ENCODE measurements at regions of chr5 and their contacts with region 1.

Region 1: DNA sequence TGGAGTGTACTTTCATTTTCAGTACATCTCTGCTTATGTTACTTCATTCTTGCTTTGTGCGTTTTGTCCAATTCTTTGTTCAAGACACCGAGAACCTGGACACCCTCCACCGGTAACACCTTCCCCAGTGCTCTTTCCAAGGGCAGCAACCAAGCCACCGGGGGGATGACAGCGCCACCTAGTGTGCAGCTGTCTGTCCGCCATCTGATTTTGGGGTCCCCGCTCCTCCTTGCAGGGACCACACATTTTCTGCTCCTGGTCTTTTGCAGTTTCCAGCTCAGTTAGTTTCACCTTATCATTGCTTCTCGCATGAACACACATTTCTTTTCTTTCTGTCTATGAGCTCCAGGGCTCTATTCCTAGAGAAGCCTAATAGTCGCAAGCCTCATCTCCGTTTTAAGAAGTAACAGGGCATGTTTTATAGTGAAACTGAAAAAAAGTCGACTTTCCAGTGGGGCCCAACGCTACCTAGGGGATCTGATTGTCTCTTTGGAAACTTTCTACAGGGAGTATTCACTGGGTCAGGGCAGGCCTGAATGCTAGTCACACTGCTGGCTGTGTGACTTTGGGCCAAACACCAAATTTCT is 152.1 kb downstream of the FSTL4 start:
- DNase-seq: peak; percentile 45 to 62
- H3K4me3 ChIP-seq: no peak overlapping the region
- H3K4me3 Mint-ChIP-seq: no peak overlapping the region
- H3K27ac Mint-ChIP-seq: no peak overlapping the region
- H3K4me1 ChIP-seq: peaks cover 28% of the 10 kb centered on the region
- H3K4me1 Mint-ChIP-seq: peaks cover 8% of the 10 kb centered on the region
- H3K27me3 ChIP-seq: no peaks in the 10 kb centered on the region
- H3K27me3 Mint-ChIP-seq: no peaks in the 10 kb centered on the region
- CTCF ChIP-seq: peak; percentile 69 to 75

Region 2: GRCh38 chr5:132283423-132284043 is 1176.7 kb before region 1 on chr5:
- CTCF ChIA-PET with region 1: no interaction called
- POLR2A ChIA-PET with region 1: no interaction called
- intact Hi-C with region 1: no loop called
- DNase-seq: peak in 1 of 2 experiments; percentile 39
- H3K4me3 ChIP-seq: no peak overlapping the region
- H3K4me3 Mint-ChIP-seq: no peak overlapping the region
- H3K27ac Mint-ChIP-seq: no peak overlapping the region
- H3K4me1 ChIP-seq: peaks cover 13% of the 10 kb centered on the region
- H3K4me1 Mint-ChIP-seq: peaks cover 18% of the 10 kb centered on the region
- H3K27me3 ChIP-seq: no peaks in the 10 kb centered on the region
- H3K27me3 Mint-ChIP-seq: no peaks in the 10 kb centered on the region
- CTCF ChIP-seq: peak; percentile 43 to 49

Region 3: GRCh38 chr5:133423618-133424282 is 36.5 kb before region 1 on chr5:
- CTCF ChIA-PET with region 1: interaction called, 13 read pairs
- POLR2A ChIA-PET with region 1: no interaction called
- intact Hi-C with region 1: loop called (anchors 1 kb)
- DNase-seq: peak; percentile 73 to 87
- H3K4me3 ChIP-seq: no peak overlapping the region
- H3K4me3 Mint-ChIP-seq: peak overlapping the region; percentile 17
- H3K27ac Mint-ChIP-seq: no peak overlapping the region
- H3K4me1 ChIP-seq: 0 out of 2 replicates have a peak, but pooled peaks cover 6% of the 10 kb centered on the region
- H3K4me1 Mint-ChIP-seq: peaks cover 9% of the 10 kb centered on the region
- H3K27me3 ChIP-seq: no peaks in the 10 kb centered on the region
- H3K27me3 Mint-ChIP-seq: peaks cover 8% of the 10 kb centered on the region
- CTCF ChIP-seq: peak; percentile 91 to 94